Activated naive CD4-positive, alpha-beta T cell treated with anti-CD3 and anti-CD28 coated beads for 36 hours (primary cell): ENCODE measurements at regions of chr7 and their contacts with region 1.

Region 1: DNA sequence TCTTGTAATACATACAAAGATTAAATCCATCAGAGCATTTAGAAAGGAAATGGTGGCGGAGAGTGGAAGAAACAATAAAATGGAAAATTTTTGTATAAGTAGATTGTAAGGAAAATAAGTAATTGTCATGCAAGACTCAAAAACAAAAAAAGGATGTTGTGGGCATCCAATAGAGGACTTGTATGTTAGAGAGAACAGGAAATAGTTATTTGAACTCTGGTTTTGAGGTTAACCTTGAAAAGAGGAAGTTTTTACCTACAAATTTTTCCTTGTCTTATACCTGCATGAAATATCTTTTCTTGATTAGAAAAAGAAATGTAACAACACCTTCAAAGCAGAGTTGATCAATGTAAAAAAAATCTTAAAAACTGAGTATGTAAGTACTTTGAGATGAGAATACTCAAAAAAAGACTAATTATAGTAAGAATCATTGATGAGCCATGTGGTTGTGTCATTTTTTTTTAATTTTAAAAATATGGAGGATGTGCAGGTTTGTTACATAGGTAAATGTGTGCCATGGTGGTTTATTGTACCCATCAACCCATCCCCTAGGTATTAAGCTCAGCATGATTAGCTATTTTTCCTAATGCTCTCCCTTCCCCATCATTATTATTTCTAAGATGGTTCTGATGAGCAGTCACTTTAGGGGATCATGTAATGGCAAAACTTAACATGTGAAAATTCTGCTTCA is 11.9 kb downstream of the TMEM106B start:
- DNase-seq: no peak
- H3K4me3 Mint-ChIP-seq: peak overlapping the region; percentile 36
- H3K27ac Mint-ChIP-seq: peak overlapping the region; percentile 88
- H3K4me1 Mint-ChIP-seq: peaks cover 35% of the 10 kb centered on the region
- H3K27me3 Mint-ChIP-seq: no peaks in the 10 kb centered on the region

Region 2: DNA sequence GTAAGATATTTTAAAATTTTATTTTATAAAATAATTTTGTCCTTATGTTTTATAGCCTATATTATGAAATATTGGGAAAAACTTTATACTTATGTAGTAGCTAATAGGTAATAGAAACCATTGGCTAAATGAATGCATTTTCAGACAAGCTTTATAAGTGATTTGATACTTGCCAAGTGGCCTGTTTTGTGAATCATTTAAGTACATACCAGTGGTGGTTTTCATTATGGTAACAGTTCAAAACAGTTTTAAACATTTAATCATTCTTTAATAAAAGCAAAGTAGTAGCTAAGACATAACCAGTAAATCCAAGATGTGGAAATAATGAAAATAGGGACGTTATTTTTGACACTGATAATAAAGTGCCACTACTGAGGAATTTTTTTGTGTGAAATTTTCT is 1067.2 kb before region 1 on chr7:
- CTCF ChIA-PET with region 1: no interaction called
- intact Hi-C with region 1: no loop called
- DNase-seq: no peak
- H3K4me3 Mint-ChIP-seq: no peak overlapping the region
- H3K27ac Mint-ChIP-seq: no peak overlapping the region
- H3K4me1 Mint-ChIP-seq: no peaks in the 10 kb centered on the region
- H3K27me3 Mint-ChIP-seq: no peaks in the 10 kb centered on the region

Region 3: DNA sequence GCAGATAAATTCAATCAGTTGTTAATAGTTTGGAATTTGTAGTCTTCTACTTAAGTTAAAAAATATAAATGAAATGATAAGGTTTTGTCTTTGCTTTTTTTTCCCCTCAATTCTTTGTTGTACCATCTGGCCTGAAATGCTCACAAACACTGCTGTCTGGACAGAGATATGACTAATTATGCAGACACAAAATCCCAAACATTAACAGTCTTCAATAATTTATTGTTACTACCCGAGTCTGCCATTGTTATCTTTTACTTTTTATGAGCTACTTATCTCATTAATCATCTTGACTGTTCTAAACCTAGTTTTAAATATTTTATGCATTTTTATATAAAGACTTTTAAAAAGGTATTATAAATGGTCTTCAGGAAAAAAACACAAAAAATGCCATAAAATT is 326.4 kb before region 1 on chr7:
- CTCF ChIA-PET with region 1: no interaction called
- intact Hi-C with region 1: no loop called
- DNase-seq: no peak
- H3K4me3 Mint-ChIP-seq: no peak overlapping the region
- H3K27ac Mint-ChIP-seq: no peak overlapping the region
- H3K4me1 Mint-ChIP-seq: no peaks in the 10 kb centered on the region
- H3K27me3 Mint-ChIP-seq: no peaks in the 10 kb centered on the region

Region 4: GRCh38 chr7:12234334-12234865 is 11.4 kb after region 1 on chr7:
- CTCF ChIA-PET with region 1: interaction called, 5 read pairs
- intact Hi-C with region 1: loop called (anchors 2 kb)
- DNase-seq: no peak
- H3K4me3 Mint-ChIP-seq: no peak overlapping the region
- H3K27ac Mint-ChIP-seq: no peak overlapping the region
- H3K4me1 Mint-ChIP-seq: peaks cover 13% of the 10 kb centered on the region
- H3K27me3 Mint-ChIP-seq: no peaks in the 10 kb centered on the region